ENCODE measurements at regions of chr3 and their contacts with region 1.

Region 1: DNA sequence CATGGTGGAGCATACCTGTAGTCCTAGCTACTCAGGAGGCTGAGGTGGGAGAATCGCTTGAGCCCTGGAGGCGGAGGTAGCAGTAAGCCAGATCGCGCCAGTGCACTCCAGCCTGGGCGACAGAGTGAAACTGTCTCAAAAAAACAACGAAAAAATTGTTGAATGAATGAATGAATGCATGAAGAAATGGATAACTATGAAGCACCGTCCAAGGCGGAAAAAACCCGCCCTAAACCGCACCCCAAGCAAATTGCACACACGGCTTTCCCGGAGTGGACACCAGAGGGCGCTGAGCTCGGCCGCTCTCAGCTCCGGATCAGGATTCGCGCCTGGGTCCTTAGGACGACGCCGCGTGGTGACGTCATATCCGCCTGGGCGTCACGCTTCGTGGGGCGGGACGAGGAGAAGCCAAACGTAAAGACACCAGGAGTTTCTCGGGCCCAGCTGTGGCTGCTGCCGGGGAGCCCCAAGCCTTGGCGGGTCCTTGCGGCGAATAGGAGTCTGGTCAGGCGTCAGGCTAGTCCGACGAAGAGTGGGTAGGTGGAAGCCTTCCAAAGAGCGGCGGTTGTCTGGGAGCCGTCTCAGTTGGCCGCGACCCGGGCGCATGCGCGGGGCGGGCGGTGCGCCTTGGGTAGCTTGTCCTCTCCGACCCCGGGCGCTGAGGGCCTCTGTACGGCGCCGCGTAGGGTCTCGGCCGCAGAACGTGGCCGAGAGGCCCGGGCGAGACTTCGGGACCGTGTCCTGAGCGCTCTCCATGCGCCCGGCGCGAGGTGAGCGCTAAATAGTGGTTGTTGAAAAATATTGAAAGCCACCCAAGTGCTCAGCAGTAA is at the starts of genes HTD2 and RPP14:
- DNase-seq: peak; percentile 96
- CTCF ChIP-seq: peak; percentile 98

Region 2: GRCh38 chr3:57918123-57918837 is 387.8 kb before region 1 on chr3:
- CTCF ChIA-PET with region 1: no interaction called
- POLR2A ChIA-PET with region 1: no interaction called
- DNase-seq: no peak
- CTCF ChIP-seq: no peak

Region 3: DNA sequence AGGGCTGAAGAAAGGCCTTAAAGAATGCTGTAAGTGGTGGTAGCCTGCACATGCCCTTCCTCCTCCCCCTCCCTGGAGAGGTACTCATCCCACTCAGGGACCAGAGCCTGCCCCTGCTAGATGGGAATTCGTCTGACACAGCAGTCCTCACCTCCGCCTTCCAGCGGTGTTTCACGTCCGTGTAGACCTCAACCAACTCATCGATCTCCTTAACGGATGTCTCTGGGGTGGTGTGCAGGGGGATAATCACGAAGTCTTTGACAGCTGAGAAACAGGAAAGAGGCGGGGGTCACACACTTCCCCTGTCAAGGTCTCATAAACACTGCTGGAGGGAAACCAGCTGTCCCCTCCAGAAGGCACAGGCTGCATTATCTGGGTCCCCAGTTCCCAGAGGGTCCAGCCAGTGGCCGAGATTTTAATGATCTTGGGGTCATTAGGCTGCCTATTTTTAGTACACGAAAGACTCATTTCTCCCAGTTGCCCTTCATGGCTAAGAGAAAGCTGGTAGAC is 105.2 kb before region 1 on chr3:
- CTCF ChIA-PET with region 1: interaction called, 27 read pairs
- POLR2A ChIA-PET with region 1: interaction called, 6 read pairs
- DNase-seq: no peak
- CTCF ChIP-seq: no peak

Region 4: DNA sequence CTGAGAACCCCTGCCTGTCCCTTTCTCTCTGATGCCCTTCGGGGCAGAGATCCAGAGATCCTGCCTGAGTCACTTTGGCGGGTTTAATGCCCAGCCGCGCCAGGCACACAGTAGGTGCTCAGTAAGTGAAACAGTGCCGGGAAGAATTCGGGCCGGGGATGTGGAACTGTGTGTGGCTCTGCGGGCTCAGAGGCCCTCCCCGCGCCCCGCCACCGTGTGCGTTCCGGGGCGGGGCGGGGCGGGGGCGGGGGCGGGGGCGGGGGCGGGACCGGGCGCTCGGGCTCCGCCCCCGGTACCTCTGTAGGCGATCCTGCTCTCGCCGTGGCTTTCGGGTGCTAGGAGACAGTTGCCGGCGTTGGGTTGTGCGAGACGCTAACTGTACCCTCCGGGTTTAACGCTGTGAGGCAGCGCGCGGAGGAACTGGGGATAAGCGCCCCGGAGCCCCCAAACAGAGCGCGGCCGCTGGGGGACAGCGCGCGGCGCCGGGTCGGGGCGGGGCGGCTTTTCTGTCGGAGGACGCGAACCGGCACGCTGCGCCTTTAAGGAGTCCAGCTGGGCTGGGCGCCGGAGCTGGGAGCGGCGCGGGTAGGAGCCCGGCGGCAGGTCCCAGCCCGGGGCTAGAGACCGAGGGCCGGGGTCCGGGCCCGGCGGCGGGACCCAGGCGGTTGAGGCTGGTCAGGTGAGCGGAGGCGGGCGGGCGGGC is 68.7 kb before region 1 on chr3 and contains the start of gene ABHD6:
- CTCF ChIA-PET with region 1: interaction called, 20 read pairs
- POLR2A ChIA-PET with region 1: interaction called, 4 read pairs
- DNase-seq: peak; percentile 90
- CTCF ChIP-seq: peak; percentile 51

Region 5: GRCh38 chr3:58332575-58333188 is 26.6 kb after region 1 on chr3 and contains the start of gene PXK:
- CTCF ChIA-PET with region 1: interaction called, 107 read pairs
- POLR2A ChIA-PET with region 1: no interaction called
- DNase-seq: peak; percentile 84
- CTCF ChIP-seq: peak; percentile 41

Region 6: DNA sequence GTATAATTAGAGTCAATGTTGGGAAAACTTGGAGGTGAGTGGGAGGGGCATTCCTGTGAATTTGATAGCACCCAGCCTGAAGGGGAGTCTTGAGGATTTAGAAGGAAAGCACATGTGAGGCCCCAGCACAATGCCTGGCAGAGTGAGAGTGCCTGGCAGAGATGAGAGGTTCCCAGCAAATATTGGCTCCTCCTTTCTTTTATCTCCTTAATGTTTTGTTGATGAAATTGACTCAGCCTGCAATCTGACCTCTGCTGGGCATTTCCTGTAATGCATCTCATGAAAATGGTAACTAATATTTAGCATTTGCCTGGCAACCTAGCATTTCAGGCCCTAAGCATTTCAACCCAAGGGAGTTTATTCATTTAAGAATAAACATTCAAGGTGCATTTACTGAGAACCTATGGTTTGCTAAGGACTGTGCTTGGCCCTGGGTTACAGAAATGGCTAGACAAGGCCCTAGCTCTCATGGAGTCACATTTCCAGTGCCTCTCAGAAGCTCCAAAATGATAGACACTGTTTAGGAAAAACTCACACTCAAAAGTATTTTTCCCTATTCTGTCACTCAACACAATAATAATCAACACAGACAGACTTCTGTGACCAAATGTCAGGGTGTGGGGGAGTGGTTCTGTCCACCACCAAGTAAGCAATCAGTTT is 108.6 kb after region 1 on chr3:
- CTCF ChIA-PET with region 1: interaction called, 31 read pairs
- POLR2A ChIA-PET with region 1: no interaction called
- DNase-seq: peak; percentile 54
- CTCF ChIP-seq: peak; percentile 65

Region 7: GRCh38 chr3:58532794-58533220 is 226.7 kb after region 1 on chr3:
- CTCF ChIA-PET with region 1: interaction called, 95 read pairs
- POLR2A ChIA-PET with region 1: no interaction called
- DNase-seq: peak; percentile 90
- CTCF ChIP-seq: peak; percentile 94

Region 8: GRCh38 chr3:58837856-58838255 is 531.8 kb after region 1 on chr3:
- CTCF ChIA-PET with region 1: no interaction called
- POLR2A ChIA-PET with region 1: no interaction called
- DNase-seq: no peak
- CTCF ChIP-seq: no peak